Activated CD8-positive, alpha-beta T cell treated with anti-CD3 and anti-CD28 coated beads for 36 hours (primary cell): ENCODE measurements at regions of chr14 and their contacts with region 1.

Region 1: DNA sequence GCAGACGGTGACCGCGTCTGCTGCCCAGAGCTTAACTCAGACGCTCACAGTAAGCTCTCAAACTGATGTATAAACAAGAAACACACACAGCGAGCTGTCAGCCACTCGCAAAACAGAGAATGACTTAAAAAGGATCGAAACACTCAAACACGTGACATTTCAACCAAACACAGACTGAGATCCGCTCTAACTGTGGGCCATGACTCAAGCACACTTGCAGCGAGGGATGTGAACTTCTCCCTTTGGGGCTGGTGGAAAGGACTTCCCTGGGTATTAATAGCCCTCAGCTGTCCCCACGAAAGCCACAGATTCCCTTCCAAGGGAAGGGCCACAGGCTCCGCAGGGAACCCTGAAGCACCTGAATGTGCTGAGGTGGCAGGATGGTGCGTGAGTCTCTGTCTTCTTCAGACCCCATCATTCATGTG is 29.1 kb downstream of the CCDC88C start:
- DNase-seq: peak; percentile 75
- ATAC-seq: peak; percentile 73
- H3K4me3 Mint-ChIP-seq: peak overlapping the region; percentile 42
- H3K27ac Mint-ChIP-seq: peak overlapping the region; percentile 87
- H3K4me1 Mint-ChIP-seq: peaks cover 88% of the 10 kb centered on the region
- H3K27me3 Mint-ChIP-seq: no peaks in the 10 kb centered on the region
- CTCF ChIP-seq: no peak

Region 2: GRCh38 chr14:91292491-91292890 is 96.1 kb before region 1 on chr14:
- CTCF ChIA-PET with region 1: no interaction called
- POLR2A ChIA-PET with region 1: no interaction called
- intact Hi-C with region 1: no loop called
- DNase-seq: peak; percentile 50
- ATAC-seq: peak; percentile 38
- H3K4me3 Mint-ChIP-seq: no peak overlapping the region
- H3K27ac Mint-ChIP-seq: peak overlapping the region; percentile 91
- H3K4me1 Mint-ChIP-seq: peaks cover 22% of the 10 kb centered on the region
- H3K27me3 Mint-ChIP-seq: no peaks in the 10 kb centered on the region
- CTCF ChIP-seq: no peak

Region 3: GRCh38 chr14:91373591-91374254 is 14.8 kb before region 1 on chr14:
- CTCF ChIA-PET with region 1: interaction called, 5 read pairs
- POLR2A ChIA-PET with region 1: interaction called, 111 read pairs
- intact Hi-C with region 1: no loop called
- DNase-seq: peak; percentile 84
- ATAC-seq: peak; percentile 53
- H3K4me3 Mint-ChIP-seq: peak overlapping the region; percentile 49
- H3K27ac Mint-ChIP-seq: peak overlapping the region; percentile 90
- H3K4me1 Mint-ChIP-seq: peaks cover 98% of the 10 kb centered on the region
- H3K27me3 Mint-ChIP-seq: no peaks in the 10 kb centered on the region
- CTCF ChIP-seq: no peak

Region 4: DNA sequence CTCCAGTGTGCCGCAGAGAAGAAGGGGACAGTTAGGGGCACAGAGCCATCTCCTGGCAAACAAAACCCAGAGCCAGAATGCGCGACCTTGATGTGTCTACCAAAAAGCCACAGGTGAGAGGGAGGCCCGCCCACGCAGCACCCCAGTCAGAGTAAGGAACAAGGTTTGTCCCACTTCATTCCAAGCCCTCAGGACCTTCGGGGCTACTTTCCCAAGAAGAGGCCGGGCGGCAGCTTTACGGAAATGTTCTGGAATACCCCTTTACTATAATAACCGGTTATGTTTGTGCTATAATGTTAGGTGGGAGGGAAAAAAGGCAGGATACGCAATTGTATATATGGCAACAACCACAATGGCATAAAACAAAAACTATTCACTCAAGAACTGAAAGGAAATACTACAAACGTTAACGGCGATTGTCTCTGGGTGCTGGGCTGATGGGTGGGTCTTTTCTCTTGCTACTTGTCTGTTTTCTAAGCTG is 16.7 kb after region 1 on chr14:
- CTCF ChIA-PET with region 1: interaction called, 4 read pairs
- POLR2A ChIA-PET with region 1: interaction called, 214 read pairs
- intact Hi-C with region 1: no loop called
- DNase-seq: peak; percentile 89
- ATAC-seq: peak; percentile 27
- H3K4me3 Mint-ChIP-seq: peak overlapping the region; percentile 59
- H3K27ac Mint-ChIP-seq: peak overlapping the region; percentile 98
- H3K4me1 Mint-ChIP-seq: peaks cover 87% of the 10 kb centered on the region
- H3K27me3 Mint-ChIP-seq: no peaks in the 10 kb centered on the region
- CTCF ChIP-seq: no peak

Region 5: DNA sequence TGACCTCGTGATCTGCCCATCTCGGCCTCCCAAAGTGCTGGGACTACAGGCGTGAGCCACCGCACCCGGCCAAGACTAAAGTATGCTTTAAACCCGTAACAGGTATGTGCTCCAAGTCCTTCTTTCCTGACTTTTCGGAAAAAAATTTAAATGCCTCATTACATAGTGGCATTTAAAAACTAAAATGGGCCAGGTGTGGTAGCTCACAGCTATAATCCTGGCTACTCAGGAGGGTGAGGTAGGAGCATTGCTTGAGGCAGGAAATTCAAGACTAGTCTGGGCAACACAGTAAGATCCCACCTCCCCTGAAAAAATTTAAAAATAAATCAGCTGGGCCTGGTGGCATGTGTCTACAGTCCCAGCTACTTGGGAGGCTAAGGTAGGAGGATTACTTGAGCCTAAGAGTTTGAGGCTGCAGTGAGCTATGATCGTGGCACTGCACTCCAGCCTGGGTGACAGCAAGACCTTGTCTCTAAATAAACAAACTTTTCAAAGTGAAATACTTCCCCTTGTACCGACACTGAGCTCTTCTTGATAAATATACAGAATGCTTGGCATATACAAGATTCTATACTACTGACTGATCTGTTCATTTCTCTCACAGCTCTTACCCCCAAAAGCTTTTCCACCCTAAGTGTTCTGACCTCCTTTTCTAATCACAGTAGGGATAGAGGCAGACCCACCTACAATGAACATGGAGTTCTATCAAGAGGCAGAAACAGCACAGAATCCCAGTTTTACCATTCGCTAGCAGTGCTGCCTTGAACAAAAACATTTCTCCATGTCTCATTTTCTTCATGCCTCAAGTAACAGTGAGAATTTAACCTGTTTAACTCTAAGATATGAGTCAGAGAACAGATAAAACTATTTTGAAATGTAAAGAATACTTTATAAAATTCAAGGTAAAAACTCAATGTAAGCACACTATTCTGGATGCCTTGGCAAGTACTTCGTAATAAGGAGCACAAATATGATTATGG is 113.7 kb after region 1 on chr14:
- CTCF ChIA-PET with region 1: no interaction called
- POLR2A ChIA-PET with region 1: no interaction called
- intact Hi-C with region 1: no loop called
- DNase-seq: no peak
- ATAC-seq: no peak
- H3K4me3 Mint-ChIP-seq: no peak overlapping the region
- H3K27ac Mint-ChIP-seq: peak overlapping the region; percentile 44
- H3K4me1 Mint-ChIP-seq: peaks cover 65% of the 10 kb centered on the region
- H3K27me3 Mint-ChIP-seq: no peaks in the 10 kb centered on the region
- CTCF ChIP-seq: no peak

Region 6: GRCh38 chr14:91806716-91807115 is 418.2 kb after region 1 on chr14:
- CTCF ChIA-PET with region 1: no interaction called
- POLR2A ChIA-PET with region 1: no interaction called
- intact Hi-C with region 1: no loop called
- DNase-seq: no peak
- ATAC-seq: no peak
- H3K4me3 Mint-ChIP-seq: no peak overlapping the region
- H3K27ac Mint-ChIP-seq: no peak overlapping the region
- H3K4me1 Mint-ChIP-seq: peaks cover 6% of the 10 kb centered on the region
- H3K27me3 Mint-ChIP-seq: no peaks in the 10 kb centered on the region
- CTCF ChIP-seq: no peak